WTC11 (cell line): ENCODE measurements at regions of chr17 and their contacts with region 1.

Region 1: GRCh38 chr17:74864866-74865395 is 5.2 kb upstream of the GRIN2C start:
- DNase-seq: peak; percentile 87
- ATAC-seq: peak; percentile 63
- H3K4me3 Mint-ChIP-seq: no peak overlapping the region
- H3K27ac Mint-ChIP-seq: peak overlapping the region; percentile 16
- H3K4me1 Mint-ChIP-seq: peaks cover 14% of the 10 kb centered on the region
- H3K27me3 Mint-ChIP-seq: peaks cover 27% of the 10 kb centered on the region
- CTCF ChIP-seq: peak; percentile 97

Region 2: DNA sequence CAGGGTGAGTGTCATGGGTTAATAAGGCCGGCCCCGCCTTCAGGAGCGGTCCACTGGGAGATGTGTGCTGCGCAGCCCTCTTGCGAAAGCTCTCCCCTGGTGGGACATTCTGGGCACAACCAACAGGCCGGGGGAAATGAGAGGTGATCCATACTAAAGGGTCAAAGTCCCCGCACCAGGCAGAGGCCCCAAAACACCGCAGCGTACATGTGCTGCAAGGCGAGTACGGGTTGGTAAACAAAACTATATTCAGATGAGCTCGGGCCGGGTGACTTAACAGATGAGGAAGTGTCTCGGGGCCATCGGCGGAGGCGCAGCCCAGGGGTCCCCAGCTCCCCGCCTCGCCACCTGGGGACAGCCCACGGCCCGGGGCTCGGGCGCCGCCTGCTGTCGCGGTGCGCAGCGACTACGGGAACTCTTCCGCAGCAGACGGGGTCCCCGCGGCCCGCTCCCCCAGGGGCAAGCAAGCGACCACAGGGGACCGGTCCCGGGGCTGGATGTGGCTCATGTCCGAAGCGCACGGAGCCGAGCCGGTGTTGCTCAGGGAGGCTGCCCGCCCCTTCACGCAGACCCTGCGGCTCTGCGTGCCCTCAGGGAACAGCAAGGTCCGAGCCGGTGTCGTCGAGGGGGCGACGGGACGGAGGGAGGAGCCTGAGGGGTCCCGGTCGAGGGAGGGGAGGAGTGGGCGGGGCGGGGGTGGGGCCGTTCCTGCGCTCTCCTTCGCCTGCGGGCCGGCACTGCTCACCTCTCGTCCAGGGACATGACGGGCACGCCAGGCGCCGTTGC is 128.2 kb before region 1 on chr17 and contains the start of gene RAB37:
- CTCF ChIA-PET with region 1: interaction called, 57 read pairs
- POLR2A ChIA-PET with region 1: no interaction called
- DNase-seq: peak; percentile 70
- ATAC-seq: peak; percentile 58
- H3K4me3 Mint-ChIP-seq: peak within 1 kb of the TSS; percentile 81
- H3K27ac Mint-ChIP-seq: peak within 1 kb of the TSS; percentile 22; the same call in 1 of the 2 replicates
- H3K4me1 Mint-ChIP-seq: peaks cover 27% of the 10 kb centered on the region
- H3K27me3 Mint-ChIP-seq: peaks cover 18% of the 10 kb centered on the region
- CTCF ChIP-seq: no peak
- total RNA-seq, gene RAB37: 8.8 to 9.4 TPM (median 8.9 TPM) in 3 replicates

Region 3: GRCh38 chr17:74776044-74776977 is 88.6 kb before region 1 on chr17 and contains the start of gene NAT9:
- CTCF ChIA-PET with region 1: interaction called, 18 read pairs
- POLR2A ChIA-PET with region 1: no interaction called
- DNase-seq: peak; percentile 99
- ATAC-seq: peak; percentile 96
- H3K4me3 Mint-ChIP-seq: peak within 1 kb of the TSS; percentile 91
- H3K27ac Mint-ChIP-seq: peak within 1 kb of the TSS; percentile 97
- H3K4me1 Mint-ChIP-seq: peaks cover 15% of the 10 kb centered on the region
- H3K27me3 Mint-ChIP-seq: no peaks in the 10 kb centered on the region
- CTCF ChIP-seq: no peak
- total RNA-seq, gene NAT9: 66.0 to 71.2 TPM (median 67.1 TPM) in 3 replicates

Region 4: GRCh38 chr17:74801896-74802295 is 63.0 kb before region 1 on chr17:
- CTCF ChIA-PET with region 1: interaction called, 15 read pairs
- POLR2A ChIA-PET with region 1: no interaction called
- DNase-seq: no peak
- ATAC-seq: no peak
- H3K4me3 Mint-ChIP-seq: no peak overlapping the region
- H3K27ac Mint-ChIP-seq: 0 out of 2 replicates have a peak overlapping the region, but pooled peaks have one; percentile 23
- H3K4me1 Mint-ChIP-seq: no peaks in the 10 kb centered on the region
- H3K27me3 Mint-ChIP-seq: no peaks in the 10 kb centered on the region
- CTCF ChIP-seq: no peak

Region 5: GRCh38 chr17:74833501-74834377 is 31.2 kb before region 1 on chr17:
- CTCF ChIA-PET with region 1: interaction called, 63 read pairs
- POLR2A ChIA-PET with region 1: no interaction called
- DNase-seq: no peak
- ATAC-seq: no peak
- H3K4me3 Mint-ChIP-seq: no peak overlapping the region
- H3K27ac Mint-ChIP-seq: no peak overlapping the region
- H3K4me1 Mint-ChIP-seq: no peaks in the 10 kb centered on the region
- H3K27me3 Mint-ChIP-seq: no peaks in the 10 kb centered on the region
- CTCF ChIP-seq: no peak

Region 6: GRCh38 chr17:74923533-74924249 is 58.8 kb after region 1 on chr17:
- CTCF ChIA-PET with region 1: interaction called, 23 read pairs
- POLR2A ChIA-PET with region 1: no interaction called
- DNase-seq: peak; percentile 79
- ATAC-seq: peak; percentile 18
- H3K4me3 Mint-ChIP-seq: peak overlapping the region; percentile 70
- H3K27ac Mint-ChIP-seq: no peak overlapping the region
- H3K4me1 Mint-ChIP-seq: peaks cover 13% of the 10 kb centered on the region
- H3K27me3 Mint-ChIP-seq: peaks cover 74% of the 10 kb centered on the region
- CTCF ChIP-seq: peak; percentile 91

Region 7: DNA sequence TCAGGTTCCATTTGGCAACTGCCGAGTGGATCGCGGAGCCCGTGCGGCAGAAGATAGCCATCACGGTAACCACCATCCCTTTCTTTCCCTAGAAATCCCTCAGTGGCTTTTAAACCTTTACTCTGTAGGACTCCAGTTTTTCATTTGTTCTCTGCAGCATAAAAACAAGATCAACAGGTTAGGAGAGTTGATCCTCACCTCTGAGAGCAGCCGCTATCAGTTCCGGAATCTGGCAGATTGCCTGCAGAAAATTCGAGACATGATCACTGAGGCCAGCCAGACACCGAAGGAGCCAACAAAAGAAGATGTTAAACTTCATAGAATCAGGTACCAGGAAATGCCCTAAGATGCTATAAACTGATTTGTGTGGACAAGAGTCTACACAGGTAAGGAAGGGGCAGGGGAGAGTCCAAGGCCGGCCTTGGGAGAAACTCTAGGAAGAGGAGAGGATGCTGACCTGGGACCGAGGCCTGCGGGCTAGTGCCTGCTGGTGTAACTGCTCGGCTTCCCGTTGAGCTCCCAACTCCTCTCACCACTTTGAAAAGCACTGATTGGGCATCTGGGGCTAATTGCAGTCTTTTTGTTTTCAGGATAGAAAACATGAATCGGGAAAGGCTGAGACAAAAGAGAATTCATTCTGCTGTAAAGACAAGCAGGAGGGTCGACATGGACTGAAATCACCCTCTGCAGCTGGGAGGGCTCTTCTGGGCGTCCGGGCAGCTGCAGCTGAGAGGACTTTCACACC is 155.6 kb after region 1 on chr17:
- CTCF ChIA-PET with region 1: no interaction called
- POLR2A ChIA-PET with region 1: no interaction called
- DNase-seq: no peak
- ATAC-seq: no peak
- H3K4me3 Mint-ChIP-seq: no peak overlapping the region
- H3K27ac Mint-ChIP-seq: peak overlapping the region; percentile 49; the same call in 1 of the 2 replicates
- H3K4me1 Mint-ChIP-seq: no peaks in the 10 kb centered on the region
- H3K27me3 Mint-ChIP-seq: no peaks in the 10 kb centered on the region
- CTCF ChIP-seq: no peak

Region 8: DNA sequence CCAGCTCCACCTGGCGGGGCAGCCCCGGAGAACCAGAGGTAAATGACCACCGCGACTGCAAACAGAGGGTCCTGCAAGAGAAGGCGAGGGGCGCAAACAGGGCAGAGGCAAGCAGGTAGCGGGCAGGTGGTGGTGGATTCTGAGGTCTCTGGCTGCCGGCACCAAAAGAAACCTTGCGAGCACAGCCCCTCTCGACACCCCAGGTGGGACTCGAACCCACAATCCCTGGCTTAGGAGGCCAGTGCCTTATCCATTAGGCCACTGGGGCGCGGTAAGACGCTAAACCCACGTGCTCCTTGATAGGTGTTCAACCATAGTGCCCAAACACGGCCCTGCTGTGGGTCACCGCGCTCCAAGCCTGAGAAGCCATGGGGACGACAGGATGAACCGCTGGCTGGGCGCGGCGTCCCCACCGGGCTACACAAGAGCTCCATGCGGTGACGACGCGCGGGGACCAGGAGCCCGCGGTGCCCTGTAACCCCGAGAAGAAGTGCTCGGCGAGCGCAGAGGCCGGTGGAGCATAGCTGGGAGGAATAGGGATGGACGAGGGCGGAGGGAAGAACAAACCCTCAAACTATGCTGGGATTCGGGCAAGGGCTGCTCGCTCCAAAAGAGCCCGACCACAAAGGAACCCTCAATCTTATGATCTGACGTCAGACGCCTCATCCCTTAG is 169.4 kb after region 1 on chr17:
- CTCF ChIA-PET with region 1: no interaction called
- POLR2A ChIA-PET with region 1: no interaction called
- DNase-seq: peak; percentile 96
- ATAC-seq: peak; percentile 42
- H3K4me3 Mint-ChIP-seq: peak overlapping the region; percentile 99
- H3K27ac Mint-ChIP-seq: peak overlapping the region; percentile 94
- H3K4me1 Mint-ChIP-seq: peaks cover 26% of the 10 kb centered on the region
- H3K27me3 Mint-ChIP-seq: peaks cover 26% of the 10 kb centered on the region
- CTCF ChIP-seq: no peak